ENCODE measurements at regions of chr4 and their contacts with region 1.

Region 1: DNA sequence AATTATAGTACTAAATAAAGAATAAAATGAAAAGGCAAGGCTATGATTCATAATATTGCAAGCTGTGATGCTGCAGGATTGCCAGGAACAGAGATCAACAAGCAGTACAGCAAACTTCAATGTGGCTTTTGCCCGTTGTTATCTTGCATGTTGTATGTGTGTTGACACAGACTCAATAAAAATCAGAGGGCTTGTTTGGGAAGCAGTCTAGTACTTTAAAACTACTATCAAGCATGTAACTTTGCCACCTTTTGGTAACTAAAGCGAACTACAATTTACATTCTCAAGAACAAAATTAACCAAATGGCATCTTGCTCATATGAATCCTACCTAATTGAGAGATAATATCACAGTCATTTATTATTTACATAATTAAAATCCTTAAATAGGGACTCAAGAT is 79.8 kb upstream of the GPM6A start:
- DNase-seq: no peak

Region 2: DNA sequence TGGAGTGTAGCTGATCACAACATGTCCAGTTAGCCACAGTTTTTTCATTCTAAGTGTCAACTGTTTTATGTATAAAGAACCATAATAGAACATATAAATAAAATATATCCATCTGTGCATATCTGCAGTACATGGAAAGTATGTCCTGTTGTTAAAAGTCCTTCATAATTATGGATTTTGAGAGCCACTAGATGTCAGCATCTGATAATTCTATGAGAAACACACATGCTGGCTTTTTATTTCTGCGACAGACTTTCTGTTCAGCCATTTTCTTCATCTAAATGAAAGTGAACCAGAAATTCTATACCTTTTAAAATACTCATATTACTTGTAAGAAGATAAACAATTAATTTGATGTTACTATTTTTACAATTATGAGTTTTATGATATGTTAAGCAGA is 331.2 kb before region 1 on chr4:
- intact Hi-C with region 1: loop called (anchors 2 kb)
- DNase-seq: no peak

Measured in posterior cingulate gyrus (tissue), 11 donors.